Activated T-helper 1 cell treated with anti-CD3 and anti-CD28 coated beads, Interleukin-12 subunit alpha, Interleukin-12 subunit beta, Interleukin-2, Interleukin-4 antibody, amounts not matched to agents 30 ng/mL and 10 ng/mL and 1 ng/mL, durations not matched to agents 14 hours and 24 hours and 36 hours (primary cell): ENCODE measurements at regions of chrX and their contacts with region 1.

Region 1: GRCh38 chrX:24395775-24396174 is 35.3 kb downstream of the SUPT20HL1 start:
- DNase-seq: peak; percentile 27
- H3K4me3 Mint-ChIP-seq: no peak overlapping the region
- H3K27ac Mint-ChIP-seq: no peak overlapping the region
- H3K4me1 Mint-ChIP-seq: peaks cover 6% of the 10 kb centered on the region
- H3K27me3 Mint-ChIP-seq: peaks cover 2% of the 10 kb centered on the region

Region 2: DNA sequence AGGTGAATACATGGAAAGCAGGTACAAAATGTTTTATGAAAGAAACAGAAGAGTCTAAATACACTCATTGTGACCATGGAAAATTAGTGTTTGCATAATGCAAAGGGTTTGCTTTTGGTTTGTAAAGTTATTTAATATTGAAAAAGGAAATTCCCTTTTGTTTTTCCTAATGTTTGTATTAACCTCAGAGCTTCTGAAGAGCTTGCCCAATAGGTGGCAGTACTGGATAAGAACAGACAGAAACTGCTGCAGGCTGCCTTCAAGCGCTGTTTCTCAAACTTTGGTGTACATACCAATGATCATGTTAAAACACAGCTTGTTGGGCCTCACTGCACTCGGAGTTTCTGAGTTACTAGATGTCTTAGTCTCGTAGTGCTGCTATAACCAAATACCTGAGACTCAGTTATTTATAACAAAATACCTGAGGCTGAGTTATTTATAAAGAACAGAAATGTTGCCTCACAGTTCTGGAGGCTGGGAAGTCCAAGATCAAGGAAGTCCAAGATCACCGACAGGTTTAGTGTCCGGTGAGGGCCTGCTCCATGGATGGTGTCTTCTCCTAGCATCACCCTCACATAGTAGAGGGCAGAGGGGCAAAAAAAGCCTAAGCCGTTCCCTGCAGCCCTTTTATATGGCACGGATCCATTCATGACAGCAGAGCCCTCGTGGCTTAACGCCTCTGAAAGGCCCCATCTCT is 136.1 kb before region 1 on chrX:
- intact Hi-C with region 1: loop called (anchors 1 kb)
- DNase-seq: peak; percentile 5
- H3K4me3 Mint-ChIP-seq: no peak overlapping the region
- H3K27ac Mint-ChIP-seq: peak overlapping the region; percentile 44
- H3K4me1 Mint-ChIP-seq: peaks cover 27% of the 10 kb centered on the region
- H3K27me3 Mint-ChIP-seq: no peaks in the 10 kb centered on the region

Region 3: GRCh38 chrX:24561121-24561520 is 165.3 kb after region 1 on chrX:
- intact Hi-C with region 1: loop called (anchors 1 kb)
- DNase-seq: no peak
- H3K4me3 Mint-ChIP-seq: no peak overlapping the region
- H3K27ac Mint-ChIP-seq: no peak overlapping the region
- H3K4me1 Mint-ChIP-seq: no peaks in the 10 kb centered on the region
- H3K27me3 Mint-ChIP-seq: no peaks in the 10 kb centered on the region

Region 4: GRCh38 chrX:25144043-25144940 is 748.5 kb after region 1 on chrX:
- intact Hi-C with region 1: loop called (anchors 10 kb)
- DNase-seq: no peak
- H3K4me3 Mint-ChIP-seq: no peak overlapping the region
- H3K27ac Mint-ChIP-seq: no peak overlapping the region
- H3K4me1 Mint-ChIP-seq: no peaks in the 10 kb centered on the region
- H3K27me3 Mint-ChIP-seq: peaks cover 13% of the 10 kb centered on the region